ENCODE measurements at regions of chr10 and their contacts with region 1.

Region 1: GRCh38 chr10:133394064-133394663 is at the start of gene MTG1:
- DNase-seq: peak in 13 of 14 experiments; percentile 84 to 96 (median 91)
- ATAC-seq: peak; percentile 78
- H3K4me3 ChIP-seq: peak within 1 kb of the TSS; percentile 74
- H3K4me3 Mint-ChIP-seq: peak within 1 kb of the TSS; percentile 95
- H3K27ac ChIP-seq: peak within 1 kb of the TSS; percentile 47 to 65
- H3K27ac Mint-ChIP-seq: peak within 1 kb of the TSS; percentile 90
- H3K4me1 ChIP-seq: peaks cover 60% of the 10 kb centered on the region
- H3K4me1 Mint-ChIP-seq: peaks cover 44% of the 10 kb centered on the region
- H3K27me3 ChIP-seq: no peaks in the 10 kb centered on the region
- H3K27me3 Mint-ChIP-seq: no peaks in the 10 kb centered on the region
- CTCF ChIP-seq: peak; percentile 18
- total RNA-seq, gene MTG1: 28.5 to 34.9 TPM

Region 2: GRCh38 chr10:133261726-133262325 is 132.3 kb before region 1 on chr10:
- CTCF ChIA-PET with region 1: no interaction called
- POLR2A ChIA-PET with region 1: no interaction called
- intact Hi-C with region 1: loop called in 1 of 2 experiments (anchors 5 kb)
- DNase-seq: peak; percentile 75 to 91 (median 85)
- ATAC-seq: peak; percentile 27
- H3K4me3 ChIP-seq: peak overlapping the region; percentile 55
- H3K4me3 Mint-ChIP-seq: peak overlapping the region; percentile 82
- H3K27ac ChIP-seq: peak overlapping the region; percentile 63 to 71
- H3K27ac Mint-ChIP-seq: peak overlapping the region; percentile 99
- H3K4me1 ChIP-seq: peaks cover 93% of the 10 kb centered on the region
- H3K4me1 Mint-ChIP-seq: peaks cover 80% of the 10 kb centered on the region
- H3K27me3 ChIP-seq: no peaks in the 10 kb centered on the region
- H3K27me3 Mint-ChIP-seq: peaks cover 5% of the 10 kb centered on the region
- CTCF ChIP-seq: no peak

Region 3: GRCh38 chr10:133329491-133330202 is 64.5 kb before region 1 on chr10:
- CTCF ChIA-PET with region 1: interaction called, 9 read pairs
- POLR2A ChIA-PET with region 1: interaction called, 5 read pairs
- intact Hi-C with region 1: loop called in 1 of 2 experiments (anchors 5 kb)
- DNase-seq: peak; percentile 75 to 95 (median 86)
- ATAC-seq: peak; percentile 86
- H3K4me3 ChIP-seq: peak overlapping the region; percentile 25
- H3K4me3 Mint-ChIP-seq: peak overlapping the region; percentile 42
- H3K27ac ChIP-seq: no peak overlapping the region
- H3K27ac Mint-ChIP-seq: no peak overlapping the region
- H3K4me1 ChIP-seq: peaks cover 27% of the 10 kb centered on the region
- H3K4me1 Mint-ChIP-seq: peaks cover 18% of the 10 kb centered on the region
- H3K27me3 ChIP-seq: peaks cover 42 to 43% of the 10 kb centered on the region in 2 experiments
- H3K27me3 Mint-ChIP-seq: peaks cover 52% of the 10 kb centered on the region
- CTCF ChIP-seq: peak; percentile 94

Region 4: GRCh38 chr10:133335246-133336117 is 58.7 kb before region 1 on chr10:
- CTCF ChIA-PET with region 1: interaction called, 9 read pairs
- POLR2A ChIA-PET with region 1: interaction called, 12 read pairs
- intact Hi-C with region 1: loop called in 1 of 2 experiments (anchors 5 kb)
- DNase-seq: peak; percentile 67 to 96 (median 83)
- ATAC-seq: peak; percentile 56
- H3K4me3 ChIP-seq: peak overlapping the region; percentile 58
- H3K4me3 Mint-ChIP-seq: peak overlapping the region; percentile 81
- H3K27ac ChIP-seq: peak overlapping the region; percentile 53 to 78
- H3K27ac Mint-ChIP-seq: peak overlapping the region; percentile 86
- H3K4me1 ChIP-seq: peaks cover 41% of the 10 kb centered on the region
- H3K4me1 Mint-ChIP-seq: peaks cover 6% of the 10 kb centered on the region
- H3K27me3 ChIP-seq: no peaks in the 10 kb centered on the region
- H3K27me3 Mint-ChIP-seq: peaks cover 12% of the 10 kb centered on the region
- CTCF ChIP-seq: no peak

Region 5: DNA sequence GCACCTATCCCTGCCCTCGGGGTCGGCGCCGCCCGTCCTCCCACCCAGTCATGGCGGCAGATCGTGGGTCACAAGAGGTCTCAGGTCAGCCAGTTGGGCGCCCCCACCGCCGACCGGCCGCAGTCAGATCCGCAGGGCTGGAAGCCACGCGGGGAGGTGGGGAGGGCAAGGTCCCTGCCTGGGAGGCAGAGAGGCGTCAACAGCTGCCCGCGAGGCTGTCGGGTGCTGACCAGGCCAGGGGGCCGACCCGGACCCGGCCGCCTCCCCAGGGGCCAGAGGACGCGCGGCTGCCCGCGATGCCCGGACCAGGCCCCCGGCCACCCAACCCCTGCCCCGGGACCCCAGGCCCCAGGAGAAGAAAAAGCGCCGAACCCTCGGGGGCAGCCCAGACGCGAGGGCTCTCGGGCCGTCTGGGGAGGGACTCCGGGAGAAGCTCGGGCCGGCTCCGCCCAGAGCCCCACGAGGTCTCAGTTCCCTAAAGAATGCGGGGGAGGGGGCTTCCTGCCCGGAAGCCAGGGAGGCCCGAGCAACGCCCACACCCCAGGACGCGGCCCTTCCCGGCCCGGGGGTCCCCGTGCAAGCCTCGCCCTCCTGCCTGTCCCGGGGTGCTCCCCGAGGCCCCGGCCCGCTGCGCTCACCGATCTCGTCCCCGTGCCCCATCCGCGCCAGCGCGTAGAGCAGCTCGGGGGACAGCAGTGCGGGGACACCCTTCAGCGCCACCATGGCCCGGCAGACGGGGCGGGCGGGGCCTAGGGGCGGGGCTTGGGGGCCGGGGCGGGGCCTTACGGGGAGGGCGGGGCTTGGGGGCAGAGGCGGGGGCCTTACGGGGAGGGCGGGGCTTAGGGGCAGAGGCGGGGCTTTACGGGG is 36.6 kb before region 1 on chr10 and contains the start of gene FUOM:
- CTCF ChIA-PET with region 1: interaction called, 3 read pairs
- POLR2A ChIA-PET with region 1: interaction called, 7 read pairs
- intact Hi-C with region 1: loop called in 1 of 2 experiments (anchors 2 kb)
- DNase-seq: peak; percentile 51 to 88 (median 66)
- ATAC-seq: peak; percentile 91
- H3K4me3 ChIP-seq: peak within 1 kb of the TSS; percentile 63
- H3K4me3 Mint-ChIP-seq: peak within 1 kb of the TSS; percentile 83
- H3K27ac ChIP-seq: peak within 1 kb of the TSS in 1 of 2 donors; percentile 29
- H3K27ac Mint-ChIP-seq: peak within 1 kb of the TSS; percentile 53
- H3K4me1 ChIP-seq: peaks cover 22% of the 10 kb centered on the region
- H3K4me1 Mint-ChIP-seq: no peaks in the 10 kb centered on the region
- H3K27me3 ChIP-seq: no peaks in the 10 kb centered on the region
- H3K27me3 Mint-ChIP-seq: no peaks in the 10 kb centered on the region
- CTCF ChIP-seq: no peak
- total RNA-seq, gene FUOM: 10.3 to 11.7 TPM

Region 6: GRCh38 chr10:133373104-133373624 is 21.0 kb before region 1 on chr10 and contains the start of gene ECHS1:
- CTCF ChIA-PET with region 1: no interaction called
- POLR2A ChIA-PET with region 1: interaction called, 19 read pairs
- intact Hi-C with region 1: loop called in 1 of 2 experiments (anchors 2 kb)
- DNase-seq: peak; percentile 79 to 95 (median 92)
- ATAC-seq: peak; percentile 99
- H3K4me3 ChIP-seq: peak within 1 kb of the TSS; percentile 60
- H3K4me3 Mint-ChIP-seq: peak within 1 kb of the TSS; percentile 87
- H3K27ac ChIP-seq: no peak within 1 kb of the TSS
- H3K27ac Mint-ChIP-seq: peak within 1 kb of the TSS; percentile 55
- H3K4me1 ChIP-seq: peaks cover 25% of the 10 kb centered on the region
- H3K4me1 Mint-ChIP-seq: peaks cover 4% of the 10 kb centered on the region
- H3K27me3 ChIP-seq: no peaks in the 10 kb centered on the region
- H3K27me3 Mint-ChIP-seq: no peaks in the 10 kb centered on the region
- CTCF ChIP-seq: no peak
- total RNA-seq, gene ECHS1: 7.6 to 8.3 TPM

Region 7: GRCh38 chr10:133378251-133379096 is 15.7 kb before region 1 on chr10:
- CTCF ChIA-PET with region 1: no interaction called
- POLR2A ChIA-PET with region 1: interaction called, 19 read pairs
- intact Hi-C with region 1: loop called in 1 of 2 experiments (anchors 1 kb)
- DNase-seq: peak; percentile 39 to 78 (median 53)
- ATAC-seq: peak; percentile 58
- H3K4me3 ChIP-seq: peak overlapping the region; percentile 93
- H3K4me3 Mint-ChIP-seq: peak overlapping the region; percentile 87
- H3K27ac ChIP-seq: peak overlapping the region in 1 of 2 donors; percentile 40
- H3K27ac Mint-ChIP-seq: peak overlapping the region; percentile 24
- H3K4me1 ChIP-seq: peaks cover 34% of the 10 kb centered on the region
- H3K4me1 Mint-ChIP-seq: peaks cover 4% of the 10 kb centered on the region
- H3K27me3 ChIP-seq: no peaks in the 10 kb centered on the region
- H3K27me3 Mint-ChIP-seq: no peaks in the 10 kb centered on the region
- CTCF ChIP-seq: no peak

Measured in CD4-positive, alpha-beta T cell (primary cell).